Activated CD4-positive, alpha-beta T cell treated with anti-CD3 and anti-CD28 coated beads, Interleukin-2, amount 10 ng/mL, durations not matched to agents 24 days and 14 days (primary cell): ENCODE measurements at regions of chr13 and their contacts with region 1.

Region 1: DNA sequence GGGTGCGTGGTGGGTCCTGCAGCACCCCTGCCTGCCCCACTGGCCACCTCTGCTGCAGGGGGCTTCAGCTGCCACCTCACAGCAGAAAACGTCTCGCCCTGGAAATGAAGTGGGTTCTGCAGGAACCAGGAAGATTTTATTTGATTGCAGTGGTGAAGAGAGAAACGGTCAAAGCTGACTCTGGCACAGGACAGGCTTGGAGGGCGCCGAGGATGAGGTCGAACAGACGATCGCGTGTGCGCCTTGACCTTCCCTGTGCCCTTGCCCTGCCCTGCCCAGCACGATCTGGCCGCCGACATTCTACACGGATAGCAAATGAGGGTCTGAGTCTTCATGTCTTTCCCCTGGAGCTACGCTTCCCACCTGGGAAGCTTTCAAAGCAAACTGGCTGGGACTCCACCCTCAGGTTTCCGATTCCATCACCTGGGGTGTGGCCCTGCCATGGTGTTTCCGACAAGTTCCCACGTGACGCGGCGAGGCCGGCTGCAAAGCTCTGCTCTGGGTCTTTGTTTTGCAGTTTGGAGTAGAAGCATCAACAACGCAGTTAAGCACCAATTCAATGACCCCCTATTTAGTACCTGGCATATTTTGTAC is 50.3 kb upstream of the TUBGCP3 start:
- DNase-seq: peak; percentile 62
- H3K4me3 Mint-ChIP-seq: no peak overlapping the region
- H3K27ac Mint-ChIP-seq: no peak overlapping the region
- H3K4me1 Mint-ChIP-seq: peaks cover 10% of the 10 kb centered on the region
- H3K27me3 Mint-ChIP-seq: peaks cover 21% of the 10 kb centered on the region

Region 2: DNA sequence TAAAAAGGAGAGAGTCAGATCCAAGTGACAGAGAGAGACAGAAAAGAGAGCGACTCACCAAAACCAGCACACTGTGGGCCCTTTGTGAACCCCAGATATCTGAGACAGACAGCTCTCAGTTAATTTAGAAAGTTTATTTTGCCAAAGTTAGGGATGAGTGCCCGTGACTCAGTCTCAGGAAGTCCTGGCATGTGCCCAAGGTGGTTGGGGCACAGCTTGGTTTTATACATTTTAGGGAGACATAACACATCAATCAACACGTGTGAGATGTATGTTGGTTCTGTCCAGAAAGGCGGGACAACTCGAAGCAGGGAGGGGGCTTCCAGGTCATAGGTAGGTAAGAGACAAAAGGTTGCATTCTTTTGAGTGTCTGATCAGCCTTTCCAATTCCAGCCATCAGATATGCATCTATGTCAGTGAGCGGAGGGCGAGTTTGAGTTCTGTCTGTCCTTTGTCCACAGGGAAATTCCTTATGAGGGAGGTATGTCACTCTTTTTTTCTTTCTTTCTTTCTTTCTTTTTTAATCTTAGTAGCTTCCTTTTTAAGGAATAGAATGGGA is 14.3 kb after region 1 on chr13:
- intact Hi-C with region 1: no loop called
- DNase-seq: no peak
- H3K4me3 Mint-ChIP-seq: no peak overlapping the region
- H3K27ac Mint-ChIP-seq: no peak overlapping the region
- H3K4me1 Mint-ChIP-seq: no peaks in the 10 kb centered on the region
- H3K27me3 Mint-ChIP-seq: peaks cover 7% of the 10 kb centered on the region

Region 3: GRCh38 chr13:112711528-112712265 is 73.4 kb after region 1 on chr13:
- intact Hi-C with region 1: no loop called
- DNase-seq: no peak
- H3K4me3 Mint-ChIP-seq: no peak overlapping the region
- H3K27ac Mint-ChIP-seq: no peak overlapping the region
- H3K4me1 Mint-ChIP-seq: peaks cover 4% of the 10 kb centered on the region
- H3K27me3 Mint-ChIP-seq: no peaks in the 10 kb centered on the region

Region 4: DNA sequence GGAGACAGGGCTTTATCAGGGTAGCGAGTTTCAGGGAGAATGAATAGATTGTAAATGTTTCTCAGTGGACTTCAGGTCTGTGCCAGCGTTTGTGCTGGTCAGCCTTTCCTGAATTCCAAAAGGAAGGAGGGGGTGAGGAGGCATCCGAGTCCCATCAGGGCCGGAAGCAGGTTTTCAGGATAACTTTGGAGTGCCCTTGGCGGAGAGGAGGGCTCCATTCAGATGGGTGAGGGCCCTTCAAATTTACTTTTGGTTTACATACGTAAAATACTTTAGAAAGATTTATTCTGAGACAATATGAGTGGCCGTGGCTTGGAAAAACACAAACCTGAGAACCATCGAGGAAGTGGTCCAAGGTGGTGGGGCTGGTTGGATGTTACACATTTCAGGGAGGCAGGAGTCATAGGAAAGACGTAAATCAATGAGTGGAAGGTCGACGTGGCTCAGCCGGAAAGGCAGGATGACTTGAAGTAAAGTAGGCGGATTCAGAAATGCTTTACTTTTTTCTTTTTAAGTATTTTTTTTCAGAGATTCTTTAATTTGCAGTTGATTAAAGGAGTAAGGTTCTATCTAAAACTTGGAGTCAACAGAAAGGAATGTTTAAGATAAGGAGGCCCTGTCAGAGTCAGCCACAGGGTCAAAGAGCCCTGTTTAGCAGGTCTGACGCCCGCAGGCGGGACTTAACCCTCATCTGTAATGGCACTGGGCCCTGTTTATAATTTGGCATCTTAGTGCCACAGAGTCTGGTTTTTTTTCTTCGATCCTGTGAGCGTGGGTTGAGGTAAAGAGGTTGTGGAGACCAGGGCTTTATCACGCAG is 84.4 kb after region 1 on chr13:
- intact Hi-C with region 1: no loop called
- DNase-seq: no peak
- H3K4me3 Mint-ChIP-seq: no peak overlapping the region
- H3K27ac Mint-ChIP-seq: peak overlapping the region; percentile 58
- H3K4me1 Mint-ChIP-seq: peaks cover 35% of the 10 kb centered on the region
- H3K27me3 Mint-ChIP-seq: no peaks in the 10 kb centered on the region

Region 5: DNA sequence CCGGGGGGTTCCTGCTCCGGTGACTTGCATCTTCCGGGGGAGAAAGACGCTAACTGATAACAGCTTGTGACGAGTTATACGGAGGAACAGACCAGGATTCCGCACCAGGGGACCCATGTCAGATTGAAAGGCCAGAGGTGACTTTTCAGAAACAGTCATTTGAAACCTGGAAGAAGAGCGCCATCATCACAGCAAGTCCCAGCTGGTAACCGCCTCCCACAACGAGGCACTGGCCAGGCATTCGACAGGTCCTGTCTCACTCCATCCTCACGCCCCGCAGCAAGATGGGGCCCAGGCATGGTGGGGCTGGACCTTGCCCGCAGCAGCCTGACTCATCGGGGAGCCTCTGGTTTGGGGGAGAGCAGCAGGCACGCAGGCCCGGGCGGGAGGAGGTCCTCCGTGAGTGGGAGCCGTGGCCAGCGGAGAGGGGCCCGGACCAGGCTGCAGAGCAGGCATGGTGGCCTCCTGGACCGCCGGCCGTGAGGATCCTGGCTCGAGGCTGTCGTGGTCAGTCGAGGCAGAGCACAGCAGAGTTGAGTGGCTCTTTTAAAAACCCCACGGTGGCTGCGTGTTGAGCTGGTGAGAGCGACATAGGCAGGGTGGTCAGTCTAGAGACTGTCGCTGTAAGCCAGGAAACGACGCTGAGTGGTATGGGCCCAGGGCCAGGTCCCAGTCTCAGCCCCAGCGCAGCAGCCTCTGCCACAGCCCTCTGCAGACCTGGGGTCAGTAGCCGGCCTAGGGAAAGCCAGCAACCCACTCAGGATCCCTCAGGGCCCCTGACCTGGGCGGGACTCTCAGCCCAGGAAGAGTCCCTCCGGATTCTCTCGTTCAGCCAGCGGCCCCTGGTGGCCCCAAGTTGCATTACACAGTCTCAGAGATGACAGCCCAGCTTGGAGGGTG is 235.8 kb after region 1 on chr13:
- intact Hi-C with region 1: loop called (anchors 1 kb)
- DNase-seq: peak; percentile 86
- H3K4me3 Mint-ChIP-seq: no peak overlapping the region
- H3K27ac Mint-ChIP-seq: peak overlapping the region; percentile 61
- H3K4me1 Mint-ChIP-seq: peaks cover 14% of the 10 kb centered on the region
- H3K27me3 Mint-ChIP-seq: no peaks in the 10 kb centered on the region